ENCODE measurements at regions of chr12 and their contacts with region 1.

Region 1: DNA sequence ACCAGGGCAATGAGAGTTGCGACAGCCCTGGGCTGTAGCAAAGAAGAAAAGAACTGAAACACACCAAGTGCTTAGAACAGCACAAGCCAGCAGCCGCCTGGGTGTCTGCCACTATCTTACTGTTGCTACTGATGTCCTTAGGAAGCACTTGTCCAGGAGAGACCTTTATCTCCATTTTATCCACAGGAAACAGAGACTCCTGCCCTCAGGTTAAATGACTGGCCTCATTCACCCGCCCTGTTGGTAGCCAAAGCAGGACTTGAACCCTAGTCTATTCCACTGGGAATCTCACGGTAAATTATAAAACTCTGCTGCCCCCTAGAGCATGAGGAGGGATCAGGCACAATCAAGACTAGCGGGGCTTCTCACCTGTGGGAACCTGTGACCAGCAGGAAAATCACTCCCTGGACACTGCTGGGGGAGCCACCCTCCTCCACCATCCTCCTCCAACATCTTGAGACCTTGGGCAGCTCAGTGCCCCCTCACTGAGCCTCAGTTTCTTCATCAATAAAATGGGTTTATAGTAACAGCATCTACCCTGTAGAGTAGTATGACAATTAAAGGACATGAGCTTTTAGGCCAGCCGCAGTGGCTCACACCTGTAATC is 20.5 kb upstream of the TESC start:
- DNase-seq: no peak
- ATAC-seq: peak; percentile 21
- H3K4me3 Mint-ChIP-seq: no peak overlapping the region
- H3K27ac Mint-ChIP-seq: no peak overlapping the region
- H3K4me1 Mint-ChIP-seq: no peaks in the 10 kb centered on the region
- H3K27me3 Mint-ChIP-seq: no peaks in the 10 kb centered on the region
- CTCF ChIP-seq: no peak

Region 2: DNA sequence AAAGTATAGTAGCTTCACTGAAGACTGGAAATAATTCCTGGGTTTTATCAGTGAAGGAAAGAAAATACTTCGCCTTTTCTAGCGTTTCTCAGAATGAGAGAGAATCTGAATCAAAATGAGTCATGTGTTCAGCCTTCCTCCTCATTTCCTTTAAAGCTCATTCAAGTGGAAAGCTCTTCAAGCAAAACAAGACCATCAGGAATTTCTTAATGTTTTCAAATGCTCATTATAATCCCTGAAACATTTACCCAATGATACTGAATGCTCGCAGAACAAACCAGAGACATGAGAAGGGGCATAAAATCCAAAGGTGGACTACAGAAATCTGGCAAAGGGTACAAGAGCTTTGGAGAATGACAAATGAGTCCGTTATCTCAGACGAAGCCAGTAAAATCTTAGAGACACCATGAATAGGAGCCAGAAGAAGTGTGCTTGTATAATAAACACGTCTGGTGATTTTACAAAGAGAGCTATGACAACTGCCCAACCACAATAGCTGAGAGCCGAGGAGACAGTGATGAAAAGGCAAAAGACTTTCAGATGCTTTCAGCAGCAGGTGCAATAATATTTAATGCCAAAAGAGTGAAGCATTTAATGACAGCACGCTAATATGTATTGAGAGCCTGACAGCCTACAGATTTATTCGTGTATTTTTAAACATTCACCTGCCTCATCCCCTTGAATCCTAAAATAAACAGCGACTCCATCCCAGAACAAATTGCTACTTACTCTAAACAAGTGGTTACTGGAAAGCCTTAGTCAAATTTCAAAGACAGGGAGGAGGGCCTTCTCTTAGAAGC is 400.8 kb before region 1 on chr12:
- CTCF ChIA-PET with region 1: no interaction called
- POLR2A ChIA-PET with region 1: interaction called, 19 read pairs
- intact Hi-C with region 1: no loop called
- DNase-seq: no peak
- ATAC-seq: no peak
- H3K4me3 Mint-ChIP-seq: no peak overlapping the region
- H3K27ac Mint-ChIP-seq: no peak overlapping the region
- H3K4me1 Mint-ChIP-seq: peaks cover 14% of the 10 kb centered on the region
- H3K27me3 Mint-ChIP-seq: no peaks in the 10 kb centered on the region
- CTCF ChIP-seq: no peak

Region 3: DNA sequence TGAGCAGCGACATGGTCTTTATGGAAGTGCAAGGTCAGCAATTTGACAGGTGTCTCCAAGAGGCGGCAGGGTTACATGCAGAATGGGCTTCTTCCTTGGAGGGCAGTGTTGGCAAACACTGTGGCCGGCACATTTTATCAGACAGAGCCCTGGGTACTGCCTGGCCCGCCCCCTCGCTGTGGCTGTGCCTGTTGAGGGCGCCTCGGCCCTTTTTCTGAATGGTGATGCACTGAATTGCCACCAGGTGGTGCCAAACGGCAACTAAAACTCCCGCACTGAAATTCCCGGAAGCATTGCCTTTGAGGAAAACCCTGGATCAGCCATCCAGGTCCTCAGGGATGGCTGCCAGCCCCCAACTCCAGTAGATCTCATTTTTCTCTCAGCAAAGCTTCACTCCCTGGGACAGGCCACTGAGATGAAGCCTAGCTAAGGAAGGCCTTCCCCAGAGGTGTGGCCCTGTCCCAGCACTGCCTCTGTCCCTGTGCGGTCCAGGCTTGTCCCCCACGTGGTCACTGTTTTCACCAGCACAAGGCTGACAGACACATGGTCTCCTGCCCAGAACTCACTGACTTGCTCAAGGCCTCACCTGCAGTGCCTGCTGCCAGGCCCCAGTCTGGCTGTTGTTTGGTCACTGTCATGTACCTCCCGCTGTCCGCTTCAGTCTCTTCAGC is 94.1 kb before region 1 on chr12:
- CTCF ChIA-PET with region 1: interaction called, 32 read pairs
- POLR2A ChIA-PET with region 1: interaction called, 4 read pairs
- intact Hi-C with region 1: loop called (anchors 1 kb)
- DNase-seq: peak; percentile 29
- ATAC-seq: peak; percentile 73
- H3K4me3 Mint-ChIP-seq: no peak overlapping the region
- H3K27ac Mint-ChIP-seq: no peak overlapping the region
- H3K4me1 Mint-ChIP-seq: peaks cover 5% of the 10 kb centered on the region
- H3K27me3 Mint-ChIP-seq: no peaks in the 10 kb centered on the region
- CTCF ChIP-seq: peak; percentile 61

Region 4: DNA sequence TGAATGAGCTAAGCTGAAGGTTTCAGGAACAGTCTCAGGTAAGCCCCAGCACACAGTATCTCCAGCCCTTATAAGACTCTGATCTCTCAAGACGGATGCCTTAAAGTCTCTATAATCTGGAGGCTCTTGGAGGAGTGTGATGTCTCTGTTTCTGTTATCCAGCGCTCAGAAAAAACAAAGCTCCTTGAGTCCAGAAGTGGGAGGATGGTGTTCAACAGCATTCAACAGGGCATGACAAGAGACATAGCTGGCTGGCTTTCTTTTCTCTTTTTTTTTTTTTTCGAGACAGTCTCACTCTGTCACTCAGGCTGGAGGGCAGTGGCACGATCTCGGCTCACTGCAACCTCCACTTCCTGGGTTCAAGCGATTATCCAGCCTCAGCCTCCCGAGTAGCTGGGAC is 11.1 kb after region 1 on chr12:
- CTCF ChIA-PET with region 1: interaction called, 4 read pairs
- POLR2A ChIA-PET with region 1: no interaction called
- intact Hi-C with region 1: loop called (anchors 1 kb)
- DNase-seq: no peak
- ATAC-seq: no peak
- H3K4me3 Mint-ChIP-seq: no peak overlapping the region
- H3K27ac Mint-ChIP-seq: no peak overlapping the region
- H3K4me1 Mint-ChIP-seq: no peaks in the 10 kb centered on the region
- H3K27me3 Mint-ChIP-seq: no peaks in the 10 kb centered on the region
- CTCF ChIP-seq: no peak